Aorta (tissue), 5 donors: ENCODE measurements at regions of chr5 and their contacts with region 1.

Region 1: GRCh38 chr5:141040771-141041426 is 10.3 kb upstream of the PCDHB1 start:
- DNase-seq: peak; percentile 88 to 96
- ATAC-seq: peak; percentile 91
- H3K4me3 ChIP-seq: no peak overlapping the region
- H3K27ac ChIP-seq: no peak overlapping the region
- H3K4me1 ChIP-seq: no peaks in the 10 kb centered on the region
- H3K27me3 ChIP-seq: no peaks in the 10 kb centered on the region

Region 2: GRCh38 chr5:140806834-140807775 is 233.8 kb before region 1 on chr5 and contains the start of gene PCDHA4:
- intact Hi-C with region 1: loop called (anchors 2 to 10 kb)
- DNase-seq: peak in 1 of 2 donors; percentile 77
- ATAC-seq: no peak
- H3K4me3 ChIP-seq: peak within 1 kb of the TSS in 1 of 2 donors; percentile 17
- H3K27ac ChIP-seq: no peak within 1 kb of the TSS
- H3K4me1 ChIP-seq: no peaks in the 10 kb centered on the region
- H3K27me3 ChIP-seq: no peaks in the 10 kb centered on the region
- total RNA-seq, gene PCDHA4: 0.78 to 0.90 TPM

Region 3: DNA sequence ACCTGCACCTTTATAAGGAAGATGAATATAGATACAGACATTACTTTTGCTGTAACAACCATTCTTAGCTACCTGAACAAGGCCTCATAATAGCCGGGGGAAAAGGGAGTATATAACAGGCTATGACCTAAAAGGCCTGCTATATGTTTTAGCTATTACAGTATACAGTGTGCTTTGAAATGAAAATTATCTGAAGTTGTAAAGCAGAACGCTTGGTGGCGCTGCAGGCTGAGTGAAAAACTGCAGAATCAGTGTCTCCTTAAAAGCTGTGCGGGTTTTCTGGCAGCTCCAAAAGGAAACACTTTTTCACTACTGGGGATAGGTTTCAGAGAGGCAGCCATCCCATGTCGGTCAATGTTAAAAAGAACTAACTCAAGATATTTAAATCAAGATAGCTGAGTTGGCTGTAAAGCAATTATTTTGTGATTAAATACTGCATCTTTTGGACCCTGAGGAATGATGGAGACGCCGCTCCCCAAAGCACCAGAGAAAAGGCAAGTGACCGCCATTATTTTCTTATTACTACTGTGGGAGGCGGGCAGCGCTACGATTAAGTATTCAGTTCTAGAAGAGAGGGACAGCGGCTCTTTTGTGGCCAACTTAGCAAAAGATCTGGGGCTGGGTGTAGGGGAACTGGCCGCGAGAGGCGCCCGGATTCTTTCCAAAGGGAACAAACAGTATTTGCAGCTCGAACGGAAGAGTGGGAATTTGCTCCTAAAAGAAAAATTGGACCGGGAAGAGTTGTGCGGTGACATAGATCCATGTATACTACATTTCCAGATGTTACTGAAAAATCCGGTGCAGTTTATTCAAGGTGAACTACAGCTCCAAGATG is 114.9 kb after region 1 on chr5:
- intact Hi-C with region 1: no loop called
- DNase-seq: no peak
- ATAC-seq: no peak
- H3K4me3 ChIP-seq: peak overlapping the region in 1 of 2 donors; percentile 14
- H3K27ac ChIP-seq: no peak overlapping the region
- H3K4me1 ChIP-seq: no peaks in the 10 kb centered on the region
- H3K27me3 ChIP-seq: no peaks in the 10 kb centered on the region